ENCODE measurements at regions of chr2 and their contacts with region 1.

Region 1: DNA sequence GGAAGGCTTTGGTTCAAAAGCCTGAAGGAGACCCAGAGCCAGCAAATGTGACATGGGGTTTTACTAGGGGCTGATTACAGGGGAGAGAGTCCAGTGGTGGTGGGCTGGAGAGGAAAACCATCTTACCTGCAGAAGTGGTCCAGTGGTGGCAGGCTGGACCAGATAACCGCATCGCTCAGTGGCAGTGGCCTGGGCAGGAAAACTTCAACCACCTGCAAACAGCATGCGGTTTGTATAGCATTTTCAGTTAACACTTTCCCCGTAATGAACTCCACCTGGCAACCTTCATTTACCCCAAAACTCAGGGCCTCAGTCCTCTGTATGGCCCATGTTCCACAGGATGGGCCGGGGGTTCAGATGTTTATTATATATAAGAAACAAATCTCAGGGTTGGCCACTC is 114.4 kb downstream of the LRRTM1 start:
- DNase-seq: no peak

Region 2: GRCh38 chr2:80222644-80223043 is 32.5 kb after region 1 on chr2:
- intact Hi-C with region 1: loop called in 1 of 2 experiments (anchors 1 kb)
- DNase-seq: no peak

Measured in posterior vena cava (tissue), 2 donors.